B cell (primary cell): ENCODE measurements at regions of chr2 and their contacts with region 1.

Region 1: GRCh38 chr2:152175458-152176325 is at the start of gene STAM2:
- DNase-seq: peak; percentile 96
- ATAC-seq: peak; percentile 84
- H3K4me3 ChIP-seq: peak within 1 kb of the TSS; percentile 95 to 99 (median 97)
- H3K4me3 Mint-ChIP-seq: peak within 1 kb of the TSS; percentile 95
- H3K27ac ChIP-seq: peak within 1 kb of the TSS; percentile 95 to 99
- H3K27ac Mint-ChIP-seq: peak within 1 kb of the TSS; percentile 100
- H3K4me1 ChIP-seq: peaks cover 17 to 26% of the 10 kb centered on the region in 2 donors
- H3K4me1 Mint-ChIP-seq: peaks cover 32% of the 10 kb centered on the region
- H3K27me3 ChIP-seq: no peaks in the 10 kb centered on the region
- H3K27me3 Mint-ChIP-seq: peaks cover 2% of the 10 kb centered on the region
- CTCF ChIP-seq: peak; percentile 98
- total RNA-seq, gene STAM2: 24.6 and 30.2 TPM in 2 replicates

Region 2: GRCh38 chr2:151261231-151261976 is 914.3 kb before region 1 on chr2 and contains the start of gene RBM43:
- CTCF ChIA-PET with region 1: no interaction called
- POLR2A ChIA-PET with region 1: no interaction called
- intact Hi-C with region 1: loop called (anchors 10 kb)
- DNase-seq: peak; percentile 86
- ATAC-seq: peak; percentile 84
- H3K4me3 ChIP-seq: peak within 1 kb of the TSS; percentile 78 to 96 (median 85)
- H3K4me3 Mint-ChIP-seq: peak within 1 kb of the TSS; percentile 94
- H3K27ac ChIP-seq: peak within 1 kb of the TSS; percentile 88 to 91
- H3K27ac Mint-ChIP-seq: peak within 1 kb of the TSS; percentile 87
- H3K4me1 ChIP-seq: peaks cover 11 to 12% of the 10 kb centered on the region in 2 donors
- H3K4me1 Mint-ChIP-seq: peaks cover 23% of the 10 kb centered on the region
- H3K27me3 ChIP-seq: no peaks in the 10 kb centered on the region
- H3K27me3 Mint-ChIP-seq: no peaks in the 10 kb centered on the region
- CTCF ChIP-seq: no peak
- total RNA-seq, gene RBM43: 8.4 and 9.0 TPM in 2 replicates

Region 3: GRCh38 chr2:151828143-151828889 is 347.4 kb before region 1 on chr2 and contains the start of gene ARL5A:
- CTCF ChIA-PET with region 1: no interaction called
- POLR2A ChIA-PET with region 1: no interaction called
- intact Hi-C with region 1: loop called (anchors 2 kb)
- DNase-seq: peak; percentile 99
- ATAC-seq: peak; percentile 93
- H3K4me3 ChIP-seq: peak within 1 kb of the TSS; percentile 69 to 98 (median 94)
- H3K4me3 Mint-ChIP-seq: peak within 1 kb of the TSS; percentile 86
- H3K27ac ChIP-seq: peak within 1 kb of the TSS; percentile 76 to 87
- H3K27ac Mint-ChIP-seq: peak within 1 kb of the TSS; percentile 93
- H3K4me1 ChIP-seq: peaks cover 20 to 29% of the 10 kb centered on the region in 2 donors
- H3K4me1 Mint-ChIP-seq: peaks cover 51% of the 10 kb centered on the region
- H3K27me3 ChIP-seq: no peaks in the 10 kb centered on the region
- H3K27me3 Mint-ChIP-seq: no peaks in the 10 kb centered on the region
- CTCF ChIP-seq: no peak
- total RNA-seq, gene ARL5A: 54.1 and 60.5 TPM in 2 replicates

Region 4: DNA sequence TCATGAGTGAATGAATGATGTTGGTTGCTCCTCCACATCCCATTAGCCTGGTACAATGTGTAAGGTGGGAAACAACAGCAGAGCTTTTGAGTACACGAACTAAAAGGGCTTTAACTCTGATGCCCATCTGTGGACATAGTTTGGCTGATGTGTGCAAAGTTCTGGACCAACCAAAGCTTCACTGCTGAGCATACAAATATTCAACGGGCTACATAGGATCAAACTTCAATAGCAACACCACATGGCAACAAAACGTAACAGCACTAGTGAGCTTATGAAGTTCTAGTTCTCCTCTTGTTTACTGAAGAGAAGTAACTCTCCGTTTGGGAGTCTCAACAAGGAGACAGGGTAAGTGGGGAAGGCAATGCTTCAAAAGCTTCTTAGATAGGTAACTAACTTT is 20.5 kb before region 1 on chr2:
- CTCF ChIA-PET with region 1: no interaction called
- POLR2A ChIA-PET with region 1: no interaction called
- intact Hi-C with region 1: no loop called
- DNase-seq: no peak
- ATAC-seq: no peak
- H3K4me3 ChIP-seq: no peak overlapping the region
- H3K4me3 Mint-ChIP-seq: no peak overlapping the region
- H3K27ac ChIP-seq: no peak overlapping the region
- H3K27ac Mint-ChIP-seq: no peak overlapping the region
- H3K4me1 ChIP-seq: peaks cover 0 to 6% of the 10 kb centered on the region in 2 donors
- H3K4me1 Mint-ChIP-seq: peaks cover 29% of the 10 kb centered on the region
- H3K27me3 ChIP-seq: no peaks in the 10 kb centered on the region
- H3K27me3 Mint-ChIP-seq: no peaks in the 10 kb centered on the region
- CTCF ChIP-seq: no peak

Region 5: GRCh38 chr2:152335010-152335725 is 159.5 kb after region 1 on chr2 and contains the start of gene FMNL2:
- CTCF ChIA-PET with region 1: no interaction called
- POLR2A ChIA-PET with region 1: interaction called, 4 read pairs
- intact Hi-C with region 1: loop called (anchors 1 kb)
- DNase-seq: peak; percentile 75
- ATAC-seq: peak; percentile 88
- H3K4me3 ChIP-seq: peak within 1 kb of the TSS; percentile 51 to 78 (median 64)
- H3K4me3 Mint-ChIP-seq: peak within 1 kb of the TSS; percentile 93
- H3K27ac ChIP-seq: no peak within 1 kb of the TSS
- H3K27ac Mint-ChIP-seq: peak within 1 kb of the TSS; percentile 79
- H3K4me1 ChIP-seq: peaks cover 10 to 12% of the 10 kb centered on the region in 2 donors
- H3K4me1 Mint-ChIP-seq: peaks cover 17% of the 10 kb centered on the region
- H3K27me3 ChIP-seq: peaks cover 0 to 16% (median 5%) of the 10 kb centered on the region in 4 experiments
- H3K27me3 Mint-ChIP-seq: peaks cover 13% of the 10 kb centered on the region
- CTCF ChIP-seq: no peak
- total RNA-seq, gene FMNL2: 8.4 and 8.8 TPM in 2 replicates

Region 6: GRCh38 chr2:152635635-152636298 is 460.1 kb after region 1 on chr2:
- CTCF ChIA-PET with region 1: interaction called, 67 read pairs
- POLR2A ChIA-PET with region 1: interaction called, 8 read pairs
- intact Hi-C with region 1: loop called (anchors 1 kb)
- DNase-seq: peak; percentile 72
- ATAC-seq: peak; percentile 61
- H3K4me3 ChIP-seq: no peak overlapping the region
- H3K4me3 Mint-ChIP-seq: no peak overlapping the region
- H3K27ac ChIP-seq: no peak overlapping the region
- H3K27ac Mint-ChIP-seq: no peak overlapping the region
- H3K4me1 ChIP-seq: no peaks in the 10 kb centered on the region
- H3K4me1 Mint-ChIP-seq: peaks cover 5% of the 10 kb centered on the region
- H3K27me3 ChIP-seq: no peaks in the 10 kb centered on the region
- H3K27me3 Mint-ChIP-seq: no peaks in the 10 kb centered on the region
- CTCF ChIP-seq: peak; percentile 83